ENCODE measurements at regions of chr13 and their contacts with region 1.

Region 1: DNA sequence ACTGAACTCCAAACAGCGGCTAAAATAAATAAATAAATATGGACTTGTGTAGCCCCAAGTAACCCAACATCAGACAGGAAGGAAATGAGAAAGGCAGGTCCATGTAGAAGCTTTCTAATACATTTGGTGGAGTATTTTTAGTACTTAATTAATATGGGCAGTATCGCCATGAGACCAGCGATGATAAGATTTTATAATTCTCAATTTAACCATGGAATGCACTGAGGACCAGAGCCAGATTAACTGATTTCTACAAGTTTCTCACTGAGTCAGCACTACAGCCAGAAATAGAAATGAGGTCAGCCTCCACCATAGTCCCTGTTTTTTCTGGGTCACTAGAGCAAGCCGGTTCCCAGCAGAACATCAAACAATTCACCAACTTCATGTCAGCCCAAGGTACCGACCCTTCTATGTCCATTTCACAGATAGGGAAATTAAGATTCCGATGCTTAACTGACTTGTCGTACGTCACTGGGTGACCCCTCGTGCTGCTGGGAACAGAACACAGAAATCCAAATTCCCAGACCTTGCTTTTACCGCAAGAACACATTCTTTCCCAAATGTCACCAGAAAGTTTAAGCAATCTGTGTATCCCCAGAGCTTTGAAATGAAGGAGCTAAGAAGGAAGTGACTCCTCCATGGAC is 90.4 kb downstream of the COL4A1 start:
- DNase-seq: no peak
- H3K4me3 ChIP-seq: no peak overlapping the region
- H3K27ac ChIP-seq: peak overlapping the region; percentile 68 to 87 (median 78)
- H3K4me1 ChIP-seq: peaks cover 0 to 71% (median 66%) of the 10 kb centered on the region in 4 donors
- H3K27me3 ChIP-seq: no peaks in the 10 kb centered on the region
- CTCF ChIP-seq: no peak
- EP300 ChIP-seq: peak; percentile 19 to 88 (median 52)
- POLR2A ChIP-seq: no peak

Region 2: GRCh38 chr13:109336730-109337129 is 879.8 kb before region 1 on chr13:
- intact Hi-C with region 1: no loop called
- DNase-seq: no peak
- H3K4me3 ChIP-seq: no peak overlapping the region
- H3K27ac ChIP-seq: no peak overlapping the region
- H3K4me1 ChIP-seq: peaks cover 0 to 9% (median 3%) of the 10 kb centered on the region in 4 donors
- H3K27me3 ChIP-seq: no peaks in the 10 kb centered on the region
- CTCF ChIP-seq: no peak
- EP300 ChIP-seq: no peak
- POLR2A ChIP-seq: no peak

Region 3: DNA sequence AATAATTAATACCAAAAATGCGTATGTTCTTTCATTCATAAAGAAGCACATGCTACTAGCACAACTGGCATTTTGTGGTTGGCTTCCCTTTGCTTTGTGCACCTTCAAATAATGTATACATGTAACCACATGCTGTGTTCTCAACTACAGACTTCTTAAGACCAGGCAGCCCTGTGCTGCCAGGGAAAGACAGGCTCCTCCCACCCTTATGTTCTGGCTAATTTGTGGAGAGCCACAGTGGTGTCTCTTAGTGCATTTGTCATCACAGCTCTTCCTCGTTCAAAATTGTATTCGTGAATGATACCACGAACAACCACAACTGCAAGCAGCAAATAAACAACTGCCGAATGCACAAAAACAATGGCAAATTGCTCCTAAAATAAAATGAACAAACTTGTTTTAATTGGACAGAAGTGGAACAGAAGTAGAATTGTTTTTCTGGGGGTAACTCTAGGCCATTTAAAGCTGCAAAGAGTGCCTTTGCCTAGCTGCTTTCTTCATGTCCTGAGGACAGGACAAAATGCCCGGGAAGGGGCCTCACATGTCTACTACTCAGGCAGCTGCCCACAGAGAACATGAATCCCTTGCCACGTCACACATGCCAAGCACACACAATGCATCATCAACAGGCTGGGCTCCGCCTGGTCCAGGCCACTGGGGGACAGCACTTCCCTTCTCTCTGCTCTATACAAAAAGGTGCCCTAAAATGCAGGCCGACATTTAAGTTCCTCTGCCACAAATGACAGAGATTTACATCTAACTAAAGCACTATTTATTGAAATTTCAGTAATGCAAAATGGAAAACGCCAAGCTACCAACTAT is 451.8 kb before region 1 on chr13:
- intact Hi-C with region 1: no loop called
- DNase-seq: no peak
- H3K4me3 ChIP-seq: no peak overlapping the region
- H3K27ac ChIP-seq: no peak overlapping the region
- H3K4me1 ChIP-seq: peaks cover 0 to 73% (median 68%) of the 10 kb centered on the region in 4 donors
- H3K27me3 ChIP-seq: no peaks in the 10 kb centered on the region
- CTCF ChIP-seq: no peak
- EP300 ChIP-seq: no peak
- POLR2A ChIP-seq: no peak

Region 4: GRCh38 chr13:110433014-110433413 is 216.5 kb after region 1 on chr13:
- intact Hi-C with region 1: loop called (anchors 5 kb)
- DNase-seq: peak; percentile 83
- H3K4me3 ChIP-seq: no peak overlapping the region
- H3K27ac ChIP-seq: peak overlapping the region; percentile 51 to 98 (median 70)
- H3K4me1 ChIP-seq: peaks cover 0 to 53% (median 26%) of the 10 kb centered on the region in 4 donors
- H3K27me3 ChIP-seq: no peaks in the 10 kb centered on the region
- CTCF ChIP-seq: no peak
- EP300 ChIP-seq: no peak
- POLR2A ChIP-seq: no peak

Region 5: DNA sequence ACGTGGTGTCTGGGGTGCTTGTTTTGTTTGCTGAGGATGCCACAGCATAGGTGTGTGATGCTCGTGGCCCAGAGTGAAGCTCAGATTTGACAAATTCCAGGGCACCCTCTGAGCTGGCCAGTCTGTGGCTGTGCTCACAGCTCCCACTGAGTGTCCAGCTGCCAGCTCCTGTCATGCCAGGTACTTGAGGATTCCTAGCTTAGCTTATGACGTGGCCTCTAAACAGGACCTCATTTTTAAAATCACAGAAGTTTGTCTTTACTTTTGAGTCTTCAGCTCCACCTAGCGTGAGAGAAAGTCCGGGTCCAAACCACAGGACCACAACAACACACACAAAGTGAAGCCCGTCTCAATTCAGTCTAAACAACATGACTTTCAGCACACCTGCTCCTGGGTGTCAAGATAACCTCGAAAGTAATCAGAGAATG is 227.7 kb after region 1 on chr13:
- intact Hi-C with region 1: loop called (anchors 2 kb)
- DNase-seq: peak; percentile 83
- H3K4me3 ChIP-seq: no peak overlapping the region
- H3K27ac ChIP-seq: peak overlapping the region; percentile 65 to 98 (median 75)
- H3K4me1 ChIP-seq: peaks cover 0 to 66% (median 48%) of the 10 kb centered on the region in 4 donors
- H3K27me3 ChIP-seq: no peaks in the 10 kb centered on the region
- CTCF ChIP-seq: peak; percentile 19 to 42 (median 39)
- EP300 ChIP-seq: peak in 1 of 4 donors; percentile 52
- POLR2A ChIP-seq: no peak

Measured in sigmoid colon (tissue), 7 donors.